Activated naive CD4-positive, alpha-beta T cell treated with anti-CD3 and anti-CD28 coated beads for 36 hours (primary cell): ENCODE measurements at regions of chr1 and their contacts with region 1.

Region 1: GRCh38 chr1:211258756-211259637 is at the start of gene RCOR3:
- DNase-seq: peak; percentile 93
- H3K4me3 Mint-ChIP-seq: peak within 1 kb of the TSS; percentile 90
- H3K27ac Mint-ChIP-seq: peak within 1 kb of the TSS; percentile 96
- H3K4me1 Mint-ChIP-seq: peaks cover 16% of the 10 kb centered on the region
- H3K27me3 Mint-ChIP-seq: no peaks in the 10 kb centered on the region
- total RNA-seq, gene RCOR3: 28.9 to 30.8 TPM

Region 2: GRCh38 chr1:210342986-210343780 is 915.8 kb before region 1 on chr1:
- CTCF ChIA-PET with region 1: no interaction called
- intact Hi-C with region 1: loop called (anchors 2 kb)
- DNase-seq: no peak
- H3K4me3 Mint-ChIP-seq: no peak overlapping the region
- H3K27ac Mint-ChIP-seq: no peak overlapping the region
- H3K4me1 Mint-ChIP-seq: peaks cover 40% of the 10 kb centered on the region
- H3K27me3 Mint-ChIP-seq: no peaks in the 10 kb centered on the region

Region 3: GRCh38 chr1:210938416-210938925 is 320.5 kb before region 1 on chr1:
- CTCF ChIA-PET with region 1: no interaction called
- intact Hi-C with region 1: no loop called
- DNase-seq: no peak
- H3K4me3 Mint-ChIP-seq: no peak overlapping the region
- H3K27ac Mint-ChIP-seq: no peak overlapping the region
- H3K4me1 Mint-ChIP-seq: peaks cover 4% of the 10 kb centered on the region
- H3K27me3 Mint-ChIP-seq: no peaks in the 10 kb centered on the region

Region 4: GRCh38 chr1:211229365-211229759 is 29.6 kb before region 1 on chr1:
- CTCF ChIA-PET with region 1: no interaction called
- intact Hi-C with region 1: loop called (anchors 1 kb)
- DNase-seq: no peak
- H3K4me3 Mint-ChIP-seq: peak overlapping the region; percentile 0
- H3K27ac Mint-ChIP-seq: peak overlapping the region; percentile 36
- H3K4me1 Mint-ChIP-seq: peaks cover 25% of the 10 kb centered on the region
- H3K27me3 Mint-ChIP-seq: no peaks in the 10 kb centered on the region

Region 5: GRCh38 chr1:211281320-211282022 is 22.5 kb after region 1 on chr1:
- CTCF ChIA-PET with region 1: interaction called, 4 read pairs
- intact Hi-C with region 1: loop called (anchors 1 kb)
- DNase-seq: no peak
- H3K4me3 Mint-ChIP-seq: no peak overlapping the region
- H3K27ac Mint-ChIP-seq: no peak overlapping the region
- H3K4me1 Mint-ChIP-seq: peaks cover 2% of the 10 kb centered on the region
- H3K27me3 Mint-ChIP-seq: no peaks in the 10 kb centered on the region

Region 6: DNA sequence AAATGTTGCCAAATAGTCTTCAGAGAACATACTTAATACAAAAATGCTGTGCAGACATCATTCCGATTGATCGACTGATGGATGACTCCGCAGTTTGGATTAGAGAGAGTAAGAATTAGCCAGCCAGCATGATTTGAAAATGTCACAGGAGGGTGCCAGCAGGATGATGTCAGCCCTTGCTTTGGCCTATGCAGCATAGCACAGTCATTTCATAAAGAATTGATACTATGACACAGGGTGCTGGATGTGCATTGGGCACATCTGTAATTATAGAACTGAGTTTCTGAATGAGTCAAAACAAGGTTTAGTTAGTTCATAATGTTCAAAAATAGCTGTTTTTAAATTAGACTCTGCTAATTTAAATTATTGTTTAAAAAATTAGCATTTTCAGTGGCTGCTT is 46.0 kb after region 1 on chr1:
- CTCF ChIA-PET with region 1: no interaction called
- intact Hi-C with region 1: loop called (anchors 1 kb)
- DNase-seq: peak; percentile 73
- H3K4me3 Mint-ChIP-seq: no peak overlapping the region
- H3K27ac Mint-ChIP-seq: peak overlapping the region; percentile 25
- H3K4me1 Mint-ChIP-seq: peaks cover 35% of the 10 kb centered on the region
- H3K27me3 Mint-ChIP-seq: no peaks in the 10 kb centered on the region

Region 7: GRCh38 chr1:211382714-211383480 is 123.9 kb after region 1 on chr1:
- CTCF ChIA-PET with region 1: interaction called, 4 read pairs
- intact Hi-C with region 1: loop called (anchors 1 kb)
- DNase-seq: peak; percentile 80
- H3K4me3 Mint-ChIP-seq: peak overlapping the region; percentile 89
- H3K27ac Mint-ChIP-seq: peak overlapping the region; percentile 92
- H3K4me1 Mint-ChIP-seq: peaks cover 40% of the 10 kb centered on the region
- H3K27me3 Mint-ChIP-seq: no peaks in the 10 kb centered on the region